Caco-2 (cell line): ENCODE measurements at regions of chr10 and their contacts with region 1.

Region 1: GRCh38 chr10:120942806-120943413 is 91.7 kb downstream of the WDR11 start:
- DNase-seq: peak; percentile 81 to 92
- H3K4me3 ChIP-seq: no peak overlapping the region
- H3K4me3 Mint-ChIP-seq: no peak overlapping the region
- H3K27ac Mint-ChIP-seq: peak overlapping the region; percentile 83
- H3K4me1 ChIP-seq: peaks cover 13% of the 10 kb centered on the region
- H3K4me1 Mint-ChIP-seq: peaks cover 13% of the 10 kb centered on the region
- H3K27me3 ChIP-seq: no peaks in the 10 kb centered on the region
- H3K27me3 Mint-ChIP-seq: no peaks in the 10 kb centered on the region
- CTCF ChIP-seq: peak; percentile 85 to 93

Region 2: GRCh38 chr10:120783867-120784266 is 159.0 kb before region 1 on chr10:
- CTCF ChIA-PET with region 1: no interaction called
- POLR2A ChIA-PET with region 1: no interaction called
- intact Hi-C with region 1: no loop called
- DNase-seq: no peak
- H3K4me3 ChIP-seq: no peak overlapping the region
- H3K4me3 Mint-ChIP-seq: no peak overlapping the region
- H3K27ac Mint-ChIP-seq: no peak overlapping the region
- H3K4me1 ChIP-seq: no peaks in the 10 kb centered on the region
- H3K4me1 Mint-ChIP-seq: no peaks in the 10 kb centered on the region
- H3K27me3 ChIP-seq: peaks cover 1% of the 10 kb centered on the region; the same call in 1 of the 2 replicates
- H3K27me3 Mint-ChIP-seq: peaks cover 33% of the 10 kb centered on the region
- CTCF ChIP-seq: no peak

Region 3: GRCh38 chr10:120997313-120997712 is 54.4 kb after region 1 on chr10:
- CTCF ChIA-PET with region 1: no interaction called
- POLR2A ChIA-PET with region 1: no interaction called
- intact Hi-C with region 1: loop called (anchors 1 kb)
- DNase-seq: no peak
- H3K4me3 ChIP-seq: no peak overlapping the region
- H3K4me3 Mint-ChIP-seq: no peak overlapping the region
- H3K27ac Mint-ChIP-seq: no peak overlapping the region
- H3K4me1 ChIP-seq: no peaks in the 10 kb centered on the region
- H3K4me1 Mint-ChIP-seq: peaks cover 6% of the 10 kb centered on the region
- H3K27me3 ChIP-seq: no peaks in the 10 kb centered on the region
- H3K27me3 Mint-ChIP-seq: no peaks in the 10 kb centered on the region
- CTCF ChIP-seq: no peak

Region 4: GRCh38 chr10:121368347-121369025 is 425.6 kb after region 1 on chr10:
- CTCF ChIA-PET with region 1: no interaction called
- POLR2A ChIA-PET with region 1: no interaction called
- intact Hi-C with region 1: loop called (anchors 5 kb)
- DNase-seq: peak; percentile 81 to 83
- H3K4me3 ChIP-seq: peak overlapping the region; percentile 7; the same call in 1 of the 2 replicates
- H3K4me3 Mint-ChIP-seq: peak overlapping the region; percentile 71
- H3K27ac Mint-ChIP-seq: peak overlapping the region; percentile 87
- H3K4me1 ChIP-seq: peaks cover 49% of the 10 kb centered on the region
- H3K4me1 Mint-ChIP-seq: peaks cover 43% of the 10 kb centered on the region
- H3K27me3 ChIP-seq: no peaks in the 10 kb centered on the region
- H3K27me3 Mint-ChIP-seq: no peaks in the 10 kb centered on the region
- CTCF ChIP-seq: peak in 1 of 2 experiments; percentile 22

Region 5: GRCh38 chr10:121734589-121735045 is 791.7 kb after region 1 on chr10:
- CTCF ChIA-PET with region 1: no interaction called
- POLR2A ChIA-PET with region 1: no interaction called
- intact Hi-C with region 1: loop called (anchors 2 kb)
- DNase-seq: peak in 1 of 2 experiments; percentile 57
- H3K4me3 ChIP-seq: peak overlapping the region; percentile 34
- H3K4me3 Mint-ChIP-seq: peak overlapping the region; percentile 76
- H3K27ac Mint-ChIP-seq: peak overlapping the region; percentile 52
- H3K4me1 ChIP-seq: peaks cover 3% of the 10 kb centered on the region; the same call in 1 of the 2 replicates
- H3K4me1 Mint-ChIP-seq: peaks cover 36% of the 10 kb centered on the region
- H3K27me3 ChIP-seq: no peaks in the 10 kb centered on the region
- H3K27me3 Mint-ChIP-seq: no peaks in the 10 kb centered on the region
- CTCF ChIP-seq: peak; percentile 68 to 82